CD4-positive, alpha-beta memory T cell (primary cell): ENCODE measurements at regions of chr9 and their contacts with region 1.

Region 1: DNA sequence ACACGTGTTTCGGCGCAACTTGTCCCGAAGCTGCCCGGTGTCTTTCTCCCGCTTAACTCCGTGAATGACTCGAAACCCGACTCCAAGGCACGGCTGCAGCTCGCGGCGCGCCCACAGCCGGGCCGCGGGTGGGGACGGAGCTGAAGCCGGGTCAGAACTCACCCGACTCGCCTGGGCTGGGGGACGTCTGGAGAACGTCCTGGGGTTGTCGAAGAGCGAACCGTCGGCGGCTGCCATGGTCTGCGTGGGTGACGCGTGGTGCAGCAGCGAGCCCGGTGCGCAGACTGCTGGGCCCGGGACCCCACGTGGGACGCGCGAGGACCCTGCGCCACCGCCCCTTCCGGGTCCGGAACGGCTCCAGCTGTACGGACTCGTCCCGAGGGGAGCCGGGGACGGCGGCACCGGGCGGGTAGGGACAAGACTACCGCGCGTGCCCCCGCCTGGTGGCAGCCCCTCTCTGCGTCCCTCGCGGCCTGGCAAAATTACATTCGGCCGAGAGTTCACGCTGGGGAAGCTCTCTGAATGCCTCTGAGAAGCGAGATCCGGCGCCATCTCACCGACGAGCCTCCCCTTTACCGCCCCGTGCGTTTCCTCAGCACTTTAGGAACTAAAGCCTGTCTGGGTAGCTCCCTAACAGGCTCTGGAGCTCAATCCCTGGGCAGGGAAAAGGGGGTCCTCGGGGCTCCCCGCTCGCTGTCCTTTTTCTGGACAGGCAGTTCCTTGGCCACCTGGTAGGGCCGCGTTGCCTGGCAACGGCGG is at the start of gene DDX31:
- DNase-seq: peak; percentile 89 to 93 (median 89)
- H3K4me3 ChIP-seq: peak within 1 kb of the TSS; percentile 88 to 97
- H3K4me3 Mint-ChIP-seq: peak within 1 kb of the TSS; percentile 88 to 95 (median 90)
- H3K27ac ChIP-seq: peak within 1 kb of the TSS; percentile 99
- H3K27ac Mint-ChIP-seq: peak within 1 kb of the TSS; percentile 93 to 100 (median 96)
- H3K4me1 ChIP-seq: peaks cover 42% of the 10 kb centered on the region
- H3K4me1 Mint-ChIP-seq: peaks cover 36 to 61% (median 44%) of the 10 kb centered on the region in 4 donors
- H3K27me3 ChIP-seq: no peaks in the 10 kb centered on the region
- H3K27me3 Mint-ChIP-seq: no peaks in the 10 kb centered on the region
- total RNA-seq, gene DDX31: 19.6 to 21.1 TPM

Region 2: DNA sequence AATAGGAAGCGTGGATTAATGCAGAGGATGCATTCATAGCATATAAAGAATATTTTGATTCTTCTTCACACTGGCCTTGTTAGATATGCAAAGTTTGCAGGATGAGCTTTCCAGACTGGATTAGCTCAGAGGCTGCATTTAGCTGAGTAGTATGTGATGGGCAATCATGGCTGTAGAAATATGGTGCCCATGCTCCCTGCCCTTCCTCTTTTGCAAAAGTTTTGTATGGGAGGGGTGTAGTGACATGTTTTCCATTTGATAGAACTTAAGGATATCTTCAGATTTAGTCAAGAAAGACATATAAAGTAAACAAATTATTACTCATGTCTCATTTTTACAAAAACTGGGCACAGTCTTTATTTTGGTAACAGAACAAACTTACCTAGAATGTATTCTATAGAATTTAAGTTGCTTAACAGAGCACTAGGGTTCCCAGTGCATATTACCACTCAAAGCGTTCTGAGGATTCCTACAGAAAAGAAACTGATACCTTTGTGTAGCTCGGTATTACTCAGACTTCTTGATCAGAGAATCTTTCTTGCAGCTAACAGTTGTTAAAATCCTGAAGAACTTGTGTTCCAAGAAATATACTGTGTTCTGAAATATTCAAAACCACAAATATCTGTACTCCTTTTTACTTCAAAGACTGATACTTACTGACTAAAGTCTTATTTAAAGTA is 10.2 kb after region 1 on chr9:
- CTCF ChIA-PET with region 1: no interaction called
- POLR2A ChIA-PET with region 1: interaction called, 12 read pairs
- intact Hi-C with region 1: no loop called
- DNase-seq: no peak
- H3K4me3 ChIP-seq: no peak overlapping the region
- H3K4me3 Mint-ChIP-seq: no peak overlapping the region
- H3K27ac ChIP-seq: no peak overlapping the region
- H3K27ac Mint-ChIP-seq: no peak overlapping the region
- H3K4me1 ChIP-seq: no peaks in the 10 kb centered on the region
- H3K4me1 Mint-ChIP-seq: peaks cover 12 to 34% (median 22%) of the 10 kb centered on the region in 4 donors
- H3K27me3 ChIP-seq: no peaks in the 10 kb centered on the region
- H3K27me3 Mint-ChIP-seq: no peaks in the 10 kb centered on the region

Region 3: GRCh38 chr9:132768932-132769905 is 99.3 kb after region 1 on chr9:
- CTCF ChIA-PET with region 1: interaction called, 7 read pairs
- POLR2A ChIA-PET with region 1: interaction called, 38 read pairs
- intact Hi-C with region 1: loop called (anchors 5 kb)
- DNase-seq: peak; percentile 57 to 75 (median 62)
- H3K4me3 ChIP-seq: peak overlapping the region; percentile 83 to 85
- H3K4me3 Mint-ChIP-seq: peak overlapping the region; percentile 95 to 100 (median 99)
- H3K27ac ChIP-seq: peak overlapping the region; percentile 68
- H3K27ac Mint-ChIP-seq: peak overlapping the region; percentile 87 to 99 (median 98)
- H3K4me1 ChIP-seq: peaks cover 16% of the 10 kb centered on the region
- H3K4me1 Mint-ChIP-seq: peaks cover 15 to 37% (median 16%) of the 10 kb centered on the region in 4 donors
- H3K27me3 ChIP-seq: no peaks in the 10 kb centered on the region
- H3K27me3 Mint-ChIP-seq: no peaks in the 10 kb centered on the region

Region 4: GRCh38 chr9:132877824-132878694 is 208.2 kb after region 1 on chr9 and contains the start of gene AK8:
- CTCF ChIA-PET with region 1: no interaction called
- POLR2A ChIA-PET with region 1: interaction called, 10 read pairs
- intact Hi-C with region 1: no loop called
- DNase-seq: peak; percentile 68 to 82 (median 79)
- H3K4me3 ChIP-seq: peak within 1 kb of the TSS; percentile 73 to 98
- H3K4me3 Mint-ChIP-seq: peak within 1 kb of the TSS; percentile 83 to 91 (median 85)
- H3K27ac ChIP-seq: peak within 1 kb of the TSS; percentile 70
- H3K27ac Mint-ChIP-seq: peak within 1 kb of the TSS; percentile 83 to 94 (median 86)
- H3K4me1 ChIP-seq: peaks cover 12% of the 10 kb centered on the region
- H3K4me1 Mint-ChIP-seq: peaks cover 8 to 17% (median 12%) of the 10 kb centered on the region in 4 donors
- H3K27me3 ChIP-seq: no peaks in the 10 kb centered on the region
- H3K27me3 Mint-ChIP-seq: peaks cover 0 to 1% of the 10 kb centered on the region in 2 donors
- total RNA-seq, gene AK8: 0.28 TPM in 1 of 2 experiments, not detected in the other